Spleen (tissue), 13 donors: ENCODE measurements at regions of chr12 and their contacts with region 1.

Region 1: DNA sequence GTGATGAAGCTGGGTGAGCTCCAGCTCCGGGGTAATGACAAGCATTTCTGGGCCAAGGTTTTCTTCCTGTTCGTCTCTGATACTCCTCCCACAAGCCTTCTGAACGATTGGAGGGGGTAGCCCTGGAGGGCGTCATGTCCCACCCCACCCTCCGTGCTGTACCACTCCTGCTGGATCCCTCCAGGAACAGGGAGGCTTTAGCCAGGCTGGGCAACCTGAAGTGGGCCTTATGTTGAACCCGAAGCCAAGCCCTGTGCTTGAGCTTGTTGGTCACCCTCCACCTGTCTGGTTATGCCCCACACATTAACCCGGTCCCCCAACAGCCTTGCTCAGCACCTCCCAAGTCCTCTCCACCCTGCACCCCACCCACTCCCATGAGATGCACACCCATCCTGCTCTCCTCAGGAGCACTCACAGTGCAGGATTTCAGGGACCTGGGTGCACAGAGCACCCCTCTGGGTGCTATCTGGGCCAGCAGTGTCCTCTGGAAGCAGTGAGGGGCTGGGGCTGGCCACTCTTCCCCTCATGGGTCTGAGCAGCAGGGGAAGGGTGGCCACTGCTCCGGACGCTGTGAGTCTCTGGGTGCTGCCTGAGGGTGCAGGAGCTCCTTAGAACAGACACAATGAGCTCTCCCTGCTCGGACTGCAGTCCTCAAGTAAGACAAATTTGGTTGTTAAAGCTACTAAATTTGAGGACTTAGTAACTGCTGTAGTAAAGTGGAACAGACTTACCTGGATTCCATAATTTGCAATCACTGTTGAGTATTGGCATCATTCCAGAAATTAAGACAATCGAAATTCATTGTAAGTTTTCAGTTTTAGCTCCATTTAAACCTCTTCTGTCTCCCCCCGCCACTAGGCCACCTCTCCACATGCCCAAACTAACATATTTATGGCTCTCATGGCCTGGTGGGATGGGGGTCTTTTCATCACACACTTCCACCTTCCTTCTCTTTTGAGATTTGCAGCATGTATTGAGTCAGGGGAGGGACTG is 6.9 kb upstream of the KRT83 start:
- DNase-seq: peak; percentile 68
- H3K4me3 ChIP-seq: no peak overlapping the region
- H3K27ac ChIP-seq: no peak overlapping the region
- H3K4me1 ChIP-seq: peaks cover 0 to 7% (median 0%) of the 10 kb centered on the region in 6 donors
- H3K27me3 ChIP-seq: peaks cover 0 to 31% (median 0%) of the 10 kb centered on the region in 7 donors
- CTCF ChIP-seq: peak in 3 of 11 experiments; percentile 10 to 26 (median 17)
- POLR2A ChIP-seq: no peak

Region 2: DNA sequence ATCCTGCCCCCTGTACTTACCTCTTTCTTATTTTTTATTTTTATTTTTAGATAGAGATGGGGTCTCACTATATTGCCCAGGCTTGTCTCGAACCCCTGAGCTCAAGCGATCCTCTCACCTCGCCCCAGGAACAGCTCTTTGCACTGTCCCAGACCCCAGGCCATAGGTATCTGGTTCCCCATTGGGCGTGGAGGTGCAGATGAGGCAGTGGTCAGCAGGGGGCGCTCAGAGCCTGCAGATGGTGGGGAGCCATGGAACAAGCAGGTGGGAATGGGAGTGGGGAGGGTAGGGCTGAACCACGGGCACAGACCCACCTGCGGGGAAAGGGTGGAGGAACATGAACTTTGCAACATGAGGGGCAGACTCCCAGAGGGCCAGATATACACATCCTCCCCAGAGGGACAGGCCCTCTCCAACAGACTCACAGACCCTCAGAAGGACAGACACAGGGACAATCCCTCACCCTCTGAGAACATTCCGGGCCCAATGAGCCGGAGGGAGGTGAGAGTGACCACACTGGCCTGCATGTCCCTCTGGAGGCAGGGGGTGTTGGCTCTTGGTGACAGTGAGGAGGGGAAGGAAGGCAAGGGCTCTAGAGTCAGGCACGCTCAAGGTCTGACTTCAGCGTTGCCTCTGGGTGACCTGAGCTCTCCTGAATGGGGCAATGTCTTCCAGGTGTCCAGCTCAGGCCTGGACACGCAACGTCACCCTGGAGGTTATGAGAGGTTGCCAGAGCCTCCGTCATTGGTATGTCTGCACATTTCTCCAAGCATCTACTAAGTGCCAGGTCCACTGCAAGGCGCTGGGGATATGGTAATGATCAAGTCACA is 171.2 kb before region 1 on chr12:
- intact Hi-C with region 1: loop called (anchors 2 kb)
- DNase-seq: peak; percentile 89
- H3K4me3 ChIP-seq: no peak overlapping the region
- H3K27ac ChIP-seq: no peak overlapping the region
- H3K4me1 ChIP-seq: peaks cover 2 to 10% (median 7%) of the 10 kb centered on the region in 6 donors
- H3K27me3 ChIP-seq: peaks cover 0 to 15% (median 7%) of the 10 kb centered on the region in 7 donors
- CTCF ChIP-seq: peak; percentile 70 to 95 (median 90)
- POLR2A ChIP-seq: no peak

Region 3: DNA sequence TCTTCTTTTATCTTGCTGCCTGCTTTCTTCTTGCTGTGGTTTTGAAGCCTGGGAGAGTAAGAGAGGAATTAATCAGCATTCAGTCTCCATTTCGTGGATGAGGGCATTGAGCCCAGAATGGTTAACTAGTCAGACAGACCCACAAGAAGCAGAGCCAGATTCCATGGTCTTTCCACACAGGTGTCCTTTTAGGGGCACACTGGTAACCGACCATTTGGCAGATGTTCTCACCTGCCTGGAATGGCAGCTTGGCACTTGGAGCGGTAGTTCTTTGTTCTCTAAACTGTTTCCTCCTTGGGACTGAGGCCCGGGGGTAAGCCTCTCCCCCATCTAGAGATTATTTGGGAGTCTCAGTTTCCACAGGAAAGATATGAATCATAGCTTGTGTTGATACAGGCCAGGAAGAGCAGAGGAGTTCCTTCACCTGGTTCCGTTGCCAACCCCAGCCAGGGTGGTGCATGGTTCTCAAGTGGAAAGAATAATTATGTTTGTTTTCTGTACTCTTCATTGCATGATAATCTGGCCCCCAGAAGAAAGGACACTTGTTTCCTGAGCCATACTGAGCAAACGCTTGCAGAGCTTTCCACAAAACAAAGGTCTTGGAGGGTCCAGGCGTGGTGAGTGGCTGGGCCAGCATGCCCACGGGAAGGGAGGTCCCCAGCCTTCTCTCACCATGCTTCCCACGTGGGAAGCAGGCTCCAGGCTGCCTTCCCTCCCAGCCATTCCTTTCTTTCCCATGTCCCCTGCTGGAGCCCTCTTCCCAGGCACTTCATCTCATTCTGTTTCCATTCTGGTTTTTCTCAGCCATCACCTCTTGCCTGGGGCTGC is 108.1 kb after region 1 on chr12:
- intact Hi-C with region 1: no loop called
- DNase-seq: no peak
- H3K4me3 ChIP-seq: no peak overlapping the region
- H3K27ac ChIP-seq: no peak overlapping the region
- H3K4me1 ChIP-seq: no peaks in the 10 kb centered on the region
- H3K27me3 ChIP-seq: peaks cover 0 to 49% (median 0%) of the 10 kb centered on the region in 7 donors
- CTCF ChIP-seq: no peak
- POLR2A ChIP-seq: no peak